ENCODE measurements at regions of chr10 and their contacts with region 1.

Region 1: GRCh38 chr10:11225935-11226334 is 208.3 kb downstream of the CELF2 start:
- DNase-seq: no peak
- ATAC-seq: peak; percentile 8
- H3K4me3 Mint-ChIP-seq: no peak overlapping the region
- H3K27ac Mint-ChIP-seq: peak overlapping the region; percentile 96
- H3K4me1 Mint-ChIP-seq: peaks cover 85% of the 10 kb centered on the region
- H3K27me3 Mint-ChIP-seq: no peaks in the 10 kb centered on the region
- CTCF ChIP-seq: no peak

Region 2: GRCh38 chr10:11178606-11179515 is 47.1 kb before region 1 on chr10:
- CTCF ChIA-PET with region 1: no interaction called
- POLR2A ChIA-PET with region 1: interaction called, 12 read pairs
- intact Hi-C with region 1: loop called (anchors 1 kb)
- DNase-seq: peak; percentile 43
- ATAC-seq: peak; percentile 75
- H3K4me3 Mint-ChIP-seq: peak overlapping the region; percentile 80
- H3K27ac Mint-ChIP-seq: peak overlapping the region; percentile 94
- H3K4me1 Mint-ChIP-seq: peaks cover 30% of the 10 kb centered on the region
- H3K27me3 Mint-ChIP-seq: no peaks in the 10 kb centered on the region
- CTCF ChIP-seq: no peak

Region 3: DNA sequence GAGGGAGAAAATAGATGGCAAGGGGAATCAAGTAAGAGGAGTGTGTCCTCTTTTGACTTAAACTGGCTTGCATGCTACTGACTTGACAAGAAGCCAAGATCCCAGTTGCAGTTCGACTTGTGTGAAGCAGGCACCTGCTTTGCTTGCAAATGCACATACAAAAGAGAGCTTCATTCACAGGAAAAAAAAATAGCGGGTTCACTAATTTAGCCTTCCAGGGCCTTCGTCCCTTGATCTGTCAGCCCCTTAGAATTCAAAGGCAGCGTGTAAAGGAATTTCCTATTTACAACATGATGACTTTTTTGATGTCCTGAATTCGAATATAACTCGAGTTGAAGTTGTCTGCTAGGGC is 16.1 kb before region 1 on chr10:
- CTCF ChIA-PET with region 1: interaction called, 6 read pairs
- POLR2A ChIA-PET with region 1: interaction called, 16 read pairs
- intact Hi-C with region 1: loop called (anchors 1 kb)
- DNase-seq: no peak
- ATAC-seq: peak; percentile 30
- H3K4me3 Mint-ChIP-seq: peak overlapping the region; percentile 78
- H3K27ac Mint-ChIP-seq: peak overlapping the region; percentile 92
- H3K4me1 Mint-ChIP-seq: peaks cover 96% of the 10 kb centered on the region
- H3K27me3 Mint-ChIP-seq: no peaks in the 10 kb centered on the region
- CTCF ChIP-seq: no peak

Region 4: GRCh38 chr10:11236234-11236633 is 10.3 kb after region 1 on chr10:
- CTCF ChIA-PET with region 1: interaction called, 28 read pairs
- POLR2A ChIA-PET with region 1: interaction called, 98 read pairs
- intact Hi-C with region 1: no loop called
- DNase-seq: no peak
- ATAC-seq: no peak
- H3K4me3 Mint-ChIP-seq: no peak overlapping the region
- H3K27ac Mint-ChIP-seq: peak overlapping the region; percentile 50
- H3K4me1 Mint-ChIP-seq: peaks cover 65% of the 10 kb centered on the region
- H3K27me3 Mint-ChIP-seq: no peaks in the 10 kb centered on the region
- CTCF ChIP-seq: no peak